Right ventricle myocardium inferior (tissue), 1 donor: ENCODE measurements at regions of chr10 and their contacts with region 1.

Region 1: GRCh38 chr10:91493313-91493712 is 83.2 kb downstream of the HECTD2 start:
- DNase-seq: no peak
- ATAC-seq: no peak

Region 2: DNA sequence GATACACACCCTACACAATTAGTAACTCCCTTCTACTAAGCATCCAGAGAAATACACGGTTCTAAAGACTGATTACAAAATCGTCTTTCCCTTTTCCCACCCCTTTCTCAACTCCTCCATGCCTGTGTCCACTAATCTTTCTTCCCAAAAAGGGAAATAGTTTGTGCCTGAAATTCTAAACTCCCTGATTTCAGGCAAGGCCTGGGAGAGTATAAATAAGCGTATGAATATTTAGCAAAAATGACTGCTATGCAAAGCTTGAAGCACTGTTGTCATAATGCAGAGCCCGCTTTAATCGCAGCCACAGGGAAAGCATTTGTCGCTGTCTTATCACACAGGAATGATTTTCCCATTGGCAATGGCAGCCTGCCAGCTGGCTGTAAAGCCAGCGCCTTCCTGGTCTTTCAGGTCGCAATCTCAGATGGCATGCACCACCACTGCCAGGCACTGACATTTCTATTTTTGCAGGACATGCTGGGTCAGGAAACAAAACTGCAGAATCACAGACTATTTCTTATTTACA is 415.7 kb before region 1 on chr10:
- intact Hi-C with region 1: no loop called
- DNase-seq: peak; percentile 86
- ATAC-seq: peak; percentile 87

Region 3: DNA sequence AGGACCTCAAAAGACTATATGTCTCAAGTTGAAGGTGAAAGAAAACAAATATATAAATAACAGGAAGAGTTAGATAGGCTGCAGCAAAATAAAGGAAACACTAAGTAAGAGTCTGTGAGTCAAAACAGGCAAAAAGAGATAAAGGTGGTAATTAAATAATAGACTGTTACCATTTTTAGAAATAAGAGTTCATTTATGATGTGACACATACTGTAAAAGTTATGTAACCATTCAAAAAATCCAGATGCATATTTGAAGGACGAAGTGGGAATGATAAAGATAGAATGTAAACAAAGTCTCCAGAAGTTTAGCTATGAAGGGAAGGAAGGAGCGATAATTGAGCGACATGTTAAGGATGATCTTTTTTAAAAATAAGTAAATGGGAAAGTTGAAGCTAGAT is 32.6 kb before region 1 on chr10:
- intact Hi-C with region 1: no loop called
- DNase-seq: no peak
- ATAC-seq: no peak

Region 4: DNA sequence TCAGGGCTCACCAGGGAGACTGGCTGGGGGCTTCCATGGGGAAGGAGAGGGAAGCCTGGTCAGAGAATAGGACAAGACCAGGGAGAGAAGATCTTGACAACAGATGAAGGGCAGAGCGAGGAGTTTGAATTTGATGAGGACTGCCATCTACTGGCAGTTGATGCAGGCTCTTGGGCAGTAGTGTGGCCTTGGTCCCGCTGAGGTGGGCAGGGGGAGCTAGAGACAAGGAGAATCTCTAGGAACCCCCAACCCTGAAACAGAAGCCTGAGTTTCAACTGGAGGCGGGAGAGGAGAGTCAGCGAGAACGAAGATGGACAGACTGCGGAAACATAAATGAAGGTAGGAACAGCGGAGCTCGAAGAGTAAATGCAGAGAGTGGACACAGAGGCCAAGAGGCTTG is 58.5 kb after region 1 on chr10:
- intact Hi-C with region 1: loop called (anchors 5 kb)
- DNase-seq: peak; percentile 64
- ATAC-seq: peak; percentile 82